HAP-1 (cell line): ENCODE measurements at regions of chr12 and their contacts with region 1.

Region 1: DNA sequence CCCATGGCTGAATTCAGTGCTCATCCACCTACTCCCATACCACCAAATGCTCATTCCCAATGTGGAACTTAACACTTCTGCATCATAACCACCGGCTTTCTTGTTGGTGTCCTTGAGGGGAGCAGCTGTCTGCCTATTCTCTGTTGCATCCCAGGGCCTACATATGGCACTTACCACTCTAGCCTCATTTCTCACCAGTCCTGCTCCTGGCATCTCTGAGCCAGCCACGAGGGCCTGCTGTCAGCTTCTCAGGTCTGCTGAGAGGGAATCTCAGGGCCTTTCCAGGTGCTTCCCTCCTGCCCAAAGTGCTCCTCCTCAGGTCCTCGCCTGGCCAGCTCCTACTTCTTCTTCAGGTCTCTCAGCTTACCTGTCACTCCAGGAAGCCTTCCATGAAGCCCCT is 24.0 kb upstream of the RND1 start:
- DNase-seq: no peak
- H3K4me3 ChIP-seq: no peak overlapping the region
- H3K4me1 ChIP-seq: peaks cover 4% of the 10 kb centered on the region; the same call in 1 of the 2 replicates
- H3K27me3 ChIP-seq: peaks cover 3% of the 10 kb centered on the region; the same call in 1 of the 2 replicates

Region 2: GRCh38 chr12:48851883-48852733 is 37.6 kb before region 1 on chr12 and contains the start of gene DDX23:
- in situ Hi-C with region 1: loop called (anchors 5 kb)
- DNase-seq: peak; percentile 96 to 98
- H3K4me3 ChIP-seq: peak within 1 kb of the TSS; percentile 67
- H3K4me1 ChIP-seq: peaks cover 14% of the 10 kb centered on the region
- H3K27me3 ChIP-seq: no peaks in the 10 kb centered on the region

Region 3: GRCh38 chr12:48925304-48926011 is 35.8 kb after region 1 on chr12 and contains the start of gene FKBP11:
- in situ Hi-C with region 1: no loop called
- DNase-seq: peak; percentile 61 to 81
- H3K4me3 ChIP-seq: peak within 1 kb of the TSS; percentile 79
- H3K4me1 ChIP-seq: peaks cover 11% of the 10 kb centered on the region
- H3K27me3 ChIP-seq: no peaks in the 10 kb centered on the region

Region 4: DNA sequence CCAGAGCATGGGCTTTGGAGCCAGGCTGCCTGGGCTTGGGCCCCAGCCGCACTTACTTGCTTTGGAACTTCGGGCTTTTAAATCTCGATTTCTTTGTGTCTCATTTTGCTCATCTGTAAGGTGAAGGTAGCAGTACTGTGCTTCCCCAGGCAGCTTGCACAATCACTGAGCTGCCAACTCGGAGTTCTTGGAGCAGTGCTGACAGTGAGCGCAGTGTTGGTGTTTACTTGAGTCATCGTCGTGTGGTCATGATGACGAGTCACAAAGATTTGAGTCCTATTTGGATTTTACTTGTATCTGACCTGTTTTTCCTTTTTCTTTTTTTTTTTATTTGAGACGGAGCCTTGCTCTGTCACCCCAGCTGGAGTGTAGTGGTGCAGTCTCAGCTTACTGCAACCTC is 1842.9 kb after region 1 on chr12:
- in situ Hi-C with region 1: no loop called
- DNase-seq: no peak
- H3K4me3 ChIP-seq: no peak overlapping the region
- H3K4me1 ChIP-seq: no peaks in the 10 kb centered on the region
- H3K27me3 ChIP-seq: no peaks in the 10 kb centered on the region